MCF 10A (cell line): ENCODE measurements at regions of chr13 and their contacts with region 1.

Region 1: DNA sequence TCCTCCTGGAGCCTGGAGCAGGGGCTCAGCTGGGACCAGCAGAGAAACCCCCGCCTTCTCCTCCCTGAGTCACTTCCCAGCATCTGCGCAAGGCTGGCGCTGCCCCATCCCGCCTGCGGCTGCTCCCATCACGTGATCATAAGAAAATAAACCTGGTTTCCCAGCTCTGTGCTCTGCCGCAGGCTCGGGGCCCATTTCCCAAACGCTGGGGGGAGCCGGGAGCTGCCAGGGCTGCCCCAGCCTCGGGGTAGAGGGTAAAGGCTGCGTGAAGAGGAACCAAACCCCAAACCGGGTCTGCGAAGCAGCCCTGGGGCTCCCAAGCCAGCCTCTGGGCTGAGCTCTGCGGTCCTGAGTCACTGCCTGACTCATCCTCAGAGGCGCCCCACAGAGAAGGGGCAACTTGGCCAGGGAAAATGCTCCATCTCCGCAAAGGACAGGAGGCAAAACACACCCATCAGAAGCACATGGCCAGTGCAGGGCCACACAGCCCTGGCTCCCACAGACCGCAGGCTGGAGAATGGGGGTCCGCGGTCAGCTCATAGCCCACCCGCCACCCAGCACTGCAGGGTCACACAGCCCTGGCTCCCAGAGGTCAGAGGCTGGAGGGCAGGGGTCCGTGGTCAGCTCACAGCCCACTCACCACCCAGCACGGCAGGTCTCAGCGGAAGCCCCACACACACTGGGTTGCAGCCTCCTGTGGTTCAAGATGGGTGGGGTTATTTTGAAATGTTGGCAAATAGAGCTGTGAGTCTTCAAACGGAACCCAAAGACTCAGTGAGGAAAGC is 67.1 kb downstream of the RASA3 start:
- DNase-seq: peak; percentile 99
- H3K4me3 Mint-ChIP-seq: peak overlapping the region; percentile 72
- H3K27ac Mint-ChIP-seq: peak overlapping the region; percentile 94
- H3K4me1 Mint-ChIP-seq: peaks cover 42% of the 10 kb centered on the region
- H3K27me3 Mint-ChIP-seq: no peaks in the 10 kb centered on the region
- CTCF ChIP-seq: no peak

Region 2: DNA sequence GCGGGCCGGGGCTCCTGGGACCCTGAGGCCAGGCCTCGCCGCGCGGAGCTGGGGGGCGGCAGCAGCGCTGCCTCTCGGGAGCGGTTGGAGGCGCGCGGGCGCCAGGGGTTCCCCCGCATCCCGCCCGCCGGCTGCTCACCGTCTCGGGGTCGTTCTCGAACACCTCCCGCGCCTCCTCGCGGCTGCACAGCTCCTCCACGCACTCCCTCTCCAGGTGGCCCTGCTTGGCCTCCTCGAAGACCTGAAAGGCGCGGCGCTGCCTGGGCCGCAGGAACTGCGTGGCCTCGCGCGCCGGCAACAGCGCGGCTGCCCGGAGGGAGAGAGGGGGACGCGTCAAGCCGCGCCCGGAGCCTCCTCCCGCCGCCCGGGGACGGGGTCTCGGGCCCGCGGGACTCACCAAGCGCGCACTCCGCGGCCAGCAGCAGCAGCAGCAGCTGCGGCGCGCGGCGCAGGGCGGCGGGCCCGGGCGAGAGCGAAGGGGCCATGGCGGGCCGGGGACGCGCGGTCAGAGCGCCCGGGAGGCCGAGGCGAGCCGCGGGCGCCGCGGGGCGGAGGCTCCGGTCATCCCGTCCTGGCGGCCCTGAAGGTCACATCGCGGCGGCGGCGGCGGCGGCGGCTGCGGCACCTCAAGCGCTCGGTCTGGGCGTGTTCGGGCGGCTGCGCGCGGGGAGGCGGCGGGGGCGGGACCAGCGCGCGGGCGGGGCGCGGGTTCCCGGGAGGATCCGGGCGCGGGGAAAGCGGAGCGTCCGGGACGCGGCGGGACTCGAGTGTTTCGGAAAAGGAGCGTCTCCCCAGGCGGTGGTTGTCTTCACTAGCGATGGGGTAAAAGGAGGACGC is 201.7 kb before region 1 on chr13 and contains the start of gene GAS6:
- CTCF ChIA-PET with region 1: no interaction called
- POLR2A ChIA-PET with region 1: no interaction called
- intact Hi-C with region 1: no loop called
- DNase-seq: peak; percentile 41
- H3K4me3 Mint-ChIP-seq: peak within 1 kb of the TSS; percentile 68
- H3K27ac Mint-ChIP-seq: peak within 1 kb of the TSS; percentile 61
- H3K4me1 Mint-ChIP-seq: peaks cover 31% of the 10 kb centered on the region
- H3K27me3 Mint-ChIP-seq: no peaks in the 10 kb centered on the region
- CTCF ChIP-seq: peak; percentile 21
- total RNA-seq, gene GAS6: 58.9 and 92.3 TPM in 2 replicates

Region 3: GRCh38 chr13:113951246-113951999 is 113.9 kb before region 1 on chr13:
- CTCF ChIA-PET with region 1: interaction called, 3 read pairs
- POLR2A ChIA-PET with region 1: interaction called, 6 read pairs
- intact Hi-C with region 1: loop called (anchors 2 kb)
- DNase-seq: peak; percentile 83
- H3K4me3 Mint-ChIP-seq: no peak overlapping the region
- H3K27ac Mint-ChIP-seq: no peak overlapping the region
- H3K4me1 Mint-ChIP-seq: peaks cover 4% of the 10 kb centered on the region
- H3K27me3 Mint-ChIP-seq: no peaks in the 10 kb centered on the region
- CTCF ChIP-seq: peak; percentile 96

Region 4: GRCh38 chr13:113981201-113981605 is 84.1 kb before region 1 on chr13:
- CTCF ChIA-PET with region 1: interaction called, 3 read pairs
- POLR2A ChIA-PET with region 1: interaction called, 18 read pairs
- intact Hi-C with region 1: no loop called
- DNase-seq: peak; percentile 99
- H3K4me3 Mint-ChIP-seq: peak overlapping the region; percentile 55
- H3K27ac Mint-ChIP-seq: no peak overlapping the region
- H3K4me1 Mint-ChIP-seq: peaks cover 33% of the 10 kb centered on the region
- H3K27me3 Mint-ChIP-seq: no peaks in the 10 kb centered on the region
- CTCF ChIP-seq: no peak

Region 5: GRCh38 chr13:114049026-114049425 is 16.3 kb before region 1 on chr13:
- CTCF ChIA-PET with region 1: no interaction called
- POLR2A ChIA-PET with region 1: no interaction called
- intact Hi-C with region 1: no loop called
- DNase-seq: no peak
- H3K4me3 Mint-ChIP-seq: no peak overlapping the region
- H3K27ac Mint-ChIP-seq: no peak overlapping the region
- H3K4me1 Mint-ChIP-seq: no peaks in the 10 kb centered on the region
- H3K27me3 Mint-ChIP-seq: no peaks in the 10 kb centered on the region
- CTCF ChIP-seq: no peak

Region 6: DNA sequence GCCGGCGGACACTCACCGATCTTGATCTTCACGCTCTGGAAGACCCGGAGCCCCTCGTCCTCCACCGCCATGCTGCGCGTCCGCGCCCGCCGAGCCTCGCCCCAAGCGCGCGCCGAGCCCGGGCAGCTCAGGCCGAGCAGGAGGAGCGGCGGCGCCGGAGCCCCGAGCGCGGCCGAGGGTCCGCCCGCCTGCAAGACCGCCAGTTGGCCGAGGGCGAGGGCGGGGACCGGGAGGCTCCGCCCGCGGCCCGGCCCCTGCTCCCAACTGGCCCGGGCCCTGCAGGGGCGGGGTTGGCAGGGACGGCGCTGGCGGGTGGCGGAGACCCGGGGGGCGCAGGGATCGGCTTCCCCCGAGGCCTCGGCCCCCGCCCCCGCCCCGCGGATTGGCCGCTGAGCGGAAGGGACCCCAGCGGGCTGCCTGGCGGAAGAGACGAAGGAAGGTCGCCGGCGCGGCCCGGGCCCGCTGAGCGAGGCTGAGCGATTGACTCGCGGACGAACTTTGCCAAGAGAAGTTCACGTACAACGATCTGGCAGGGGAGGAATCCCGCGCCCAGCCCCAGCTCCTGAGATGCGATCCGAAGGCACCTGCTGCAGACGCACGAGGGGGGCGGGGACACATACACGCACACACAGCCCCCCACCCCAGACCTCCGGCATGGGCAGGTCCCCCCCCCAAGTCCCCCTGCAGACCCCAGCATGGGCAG is 67.2 kb after region 1 on chr13 and contains the start of gene RASA3:
- CTCF ChIA-PET with region 1: no interaction called
- POLR2A ChIA-PET with region 1: interaction called, 10 read pairs
- intact Hi-C with region 1: loop called (anchors 1 kb)
- DNase-seq: peak; percentile 71
- H3K4me3 Mint-ChIP-seq: peak within 1 kb of the TSS; percentile 89
- H3K27ac Mint-ChIP-seq: peak within 1 kb of the TSS; percentile 69
- H3K4me1 Mint-ChIP-seq: peaks cover 5% of the 10 kb centered on the region
- H3K27me3 Mint-ChIP-seq: no peaks in the 10 kb centered on the region
- CTCF ChIP-seq: no peak
- total RNA-seq, gene RASA3: 9.1 and 12.1 TPM in 2 replicates

Region 7: DNA sequence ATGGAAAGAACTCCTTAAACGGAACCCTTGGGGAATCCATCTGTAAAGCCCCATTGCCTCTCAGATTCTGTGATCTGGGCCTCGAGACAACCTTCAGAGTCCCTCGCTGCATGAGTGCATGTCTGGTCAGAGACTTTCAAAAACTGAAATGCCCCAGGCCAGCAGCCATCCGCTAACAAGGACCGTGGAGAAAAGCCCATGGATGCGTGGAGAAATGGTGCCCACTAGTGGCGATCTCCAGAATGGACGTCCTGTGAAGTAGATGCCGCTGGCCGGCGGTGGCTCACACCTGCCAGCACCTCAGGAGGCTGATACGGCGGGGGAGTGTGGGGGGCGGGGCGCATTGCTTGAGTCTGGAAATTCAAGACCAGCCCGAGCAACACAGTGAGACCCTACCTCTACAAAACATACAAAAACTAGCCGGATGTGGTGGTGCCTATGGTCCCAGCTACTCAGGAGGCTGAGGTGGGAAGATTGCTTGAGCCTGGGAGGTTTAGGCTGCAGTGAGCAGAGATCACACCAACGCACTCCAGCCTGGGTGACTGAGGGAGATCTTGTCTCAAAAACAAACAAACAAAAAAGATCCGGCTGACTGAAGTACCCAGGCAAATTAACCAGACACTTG is 161.5 kb after region 1 on chr13:
- CTCF ChIA-PET with region 1: interaction called, 3 read pairs
- POLR2A ChIA-PET with region 1: interaction called, 5 read pairs
- intact Hi-C with region 1: loop called (anchors 1 kb)
- DNase-seq: peak; percentile 84
- H3K4me3 Mint-ChIP-seq: no peak overlapping the region
- H3K27ac Mint-ChIP-seq: no peak overlapping the region
- H3K4me1 Mint-ChIP-seq: peaks cover 6% of the 10 kb centered on the region
- H3K27me3 Mint-ChIP-seq: no peaks in the 10 kb centered on the region
- CTCF ChIP-seq: peak; percentile 96